ENCODE measurements at regions of chr17 and their contacts with region 1.

Region 1: GRCh38 chr17:51540151-51540550 is 279.8 kb downstream of the UTP18 start:
- DNase-seq: no peak
- H3K27ac ChIP-seq: no peak overlapping the region
- CTCF ChIP-seq: no peak

Region 2: GRCh38 chr17:51298508-51299371 is 241.4 kb before region 1 on chr17:
- CTCF ChIA-PET with region 1: interaction called, 16 read pairs
- POLR2A ChIA-PET with region 1: no interaction called
- DNase-seq: peak; percentile 31
- H3K27ac ChIP-seq: no peak overlapping the region
- CTCF ChIP-seq: peak; percentile 80

Region 3: GRCh38 chr17:51371732-51372151 is 168.4 kb before region 1 on chr17:
- CTCF ChIA-PET with region 1: interaction called, 20 read pairs
- POLR2A ChIA-PET with region 1: no interaction called
- DNase-seq: peak; percentile 68
- H3K27ac ChIP-seq: no peak overlapping the region
- CTCF ChIP-seq: peak; percentile 39

Region 4: DNA sequence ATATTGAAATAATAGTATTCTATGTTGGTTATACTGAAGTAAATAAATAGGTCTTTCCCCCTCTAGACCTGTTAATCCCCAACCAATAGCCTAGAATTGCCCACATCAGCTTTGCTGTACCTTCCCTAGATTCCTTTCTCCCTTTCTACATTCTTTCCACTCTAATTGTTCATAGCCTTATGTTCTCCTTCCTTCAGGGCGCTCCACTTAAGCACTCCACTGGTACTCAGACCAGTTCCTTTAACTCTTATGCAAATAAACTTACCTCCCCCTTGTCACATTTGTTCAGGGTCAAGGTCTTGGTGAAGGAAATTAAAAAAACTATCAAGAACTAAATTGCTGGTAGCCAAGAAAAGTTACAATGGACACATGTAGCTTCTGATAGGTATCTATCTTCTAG is 15.0 kb after region 1 on chr17:
- CTCF ChIA-PET with region 1: no interaction called
- POLR2A ChIA-PET with region 1: no interaction called
- DNase-seq: no peak
- H3K27ac ChIP-seq: no peak overlapping the region
- CTCF ChIP-seq: no peak

Measured in RWPE1 (cell line).